ENCODE measurements at regions of chr19 and their contacts with region 1.

Region 1: DNA sequence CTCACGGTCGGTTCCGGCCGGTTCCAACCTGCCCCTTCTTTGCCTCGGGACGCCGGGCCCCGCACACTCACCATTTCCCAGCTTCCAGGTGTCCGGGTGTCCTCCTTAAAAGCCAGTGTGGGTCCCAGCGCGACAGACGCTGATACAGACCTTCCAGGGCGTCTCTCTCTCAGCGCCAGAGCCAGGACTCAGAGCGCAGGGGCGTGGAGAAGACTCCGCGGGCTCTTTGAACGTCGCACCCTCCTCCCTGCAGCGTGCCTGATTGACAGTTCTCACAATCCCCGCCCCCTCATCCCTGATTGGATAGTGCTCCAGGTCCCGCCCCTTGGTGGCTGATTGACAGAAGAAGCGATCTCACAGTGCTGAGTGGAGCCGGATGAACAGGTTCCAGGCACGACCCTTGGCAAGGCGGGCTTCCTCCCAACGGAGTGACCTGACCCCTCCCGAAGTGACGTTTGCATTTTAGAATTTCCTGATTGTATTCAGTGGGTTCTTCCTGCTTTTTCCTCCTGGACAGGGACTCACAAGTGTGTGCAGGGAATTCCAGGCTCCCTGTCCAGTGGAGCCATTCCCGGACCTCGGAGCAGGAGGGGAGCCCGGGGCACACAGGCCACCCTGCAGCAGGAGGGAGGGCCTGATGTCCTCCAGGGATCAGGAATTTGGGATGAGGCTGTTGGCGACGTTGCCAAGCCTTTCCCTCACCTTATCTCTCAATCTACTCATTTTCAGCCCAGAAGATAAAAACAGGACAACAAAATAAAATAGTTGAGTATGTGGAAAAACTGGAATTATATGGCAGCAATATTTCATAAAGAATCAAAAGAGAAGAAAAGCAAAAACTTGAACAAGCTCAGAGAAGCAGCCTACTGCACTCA is at the start of gene ZNF823:
- DNase-seq: peak; percentile 100
- H3K4me3 ChIP-seq: peak within 1 kb of the TSS; percentile 91 to 99 (median 95)
- H3K27ac ChIP-seq: peak within 1 kb of the TSS; percentile 89 to 97 (median 94)
- H3K4me1 ChIP-seq: peaks cover 0 to 24% (median 18%) of the 10 kb centered on the region in 4 donors
- H3K27me3 ChIP-seq: no peaks in the 10 kb centered on the region
- CTCF ChIP-seq: no peak
- EP300 ChIP-seq: no peak
- POLR2A ChIP-seq: peak; percentile 72 to 93
- total RNA-seq, gene ZNF823: 4.1 to 22.8 (median 17.3) TPM

Region 2: DNA sequence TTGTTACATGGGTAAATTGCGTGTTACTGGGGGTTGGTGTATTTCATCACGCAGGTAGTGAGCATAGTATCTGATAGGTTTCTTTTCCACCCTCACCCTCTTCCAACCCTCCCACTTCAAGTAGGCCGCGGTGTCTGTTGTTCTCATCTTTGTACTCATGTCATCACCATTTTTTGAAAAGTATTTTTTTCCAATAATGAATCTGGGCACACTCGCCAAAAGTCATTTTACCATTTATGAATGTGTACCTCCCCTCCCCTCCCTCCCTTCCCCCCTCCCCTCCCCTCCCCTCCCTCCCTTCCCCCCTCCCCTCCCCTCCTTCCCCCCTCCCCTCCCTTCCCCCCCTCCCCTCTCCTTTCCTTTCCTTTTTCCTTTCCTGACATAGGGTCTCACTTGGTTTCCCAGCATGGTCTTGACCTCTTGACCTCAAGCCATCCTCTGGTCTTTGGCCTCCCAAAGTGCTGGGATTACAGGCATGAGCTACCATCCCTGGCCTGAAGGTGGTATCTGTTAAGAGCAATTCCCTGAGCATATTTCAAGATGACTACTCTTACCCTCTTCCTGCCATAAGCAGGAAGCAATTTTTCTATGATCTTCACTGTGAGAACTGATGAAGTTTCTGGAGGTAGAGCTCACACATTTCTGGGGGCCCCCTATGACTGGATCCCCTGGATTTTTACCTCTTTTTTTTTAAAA is 126.0 kb before region 1 on chr19:
- intact Hi-C with region 1: no loop called
- DNase-seq: no peak
- H3K4me3 ChIP-seq: no peak overlapping the region
- H3K27ac ChIP-seq: no peak overlapping the region
- H3K4me1 ChIP-seq: no peaks in the 10 kb centered on the region
- H3K27me3 ChIP-seq: no peaks in the 10 kb centered on the region
- CTCF ChIP-seq: no peak
- EP300 ChIP-seq: no peak
- POLR2A ChIP-seq: no peak

Region 3: GRCh38 chr19:11694533-11695439 is 44.2 kb before region 1 on chr19:
- intact Hi-C with region 1: loop called (anchors 2 kb)
- DNase-seq: peak; percentile 97
- H3K4me3 ChIP-seq: peak overlapping the region; percentile 66 to 79 (median 76)
- H3K27ac ChIP-seq: peak overlapping the region; percentile 61 to 75 (median 74)
- H3K4me1 ChIP-seq: peaks cover 0 to 13% (median 10%) of the 10 kb centered on the region in 4 donors
- H3K27me3 ChIP-seq: no peaks in the 10 kb centered on the region
- CTCF ChIP-seq: no peak
- EP300 ChIP-seq: no peak
- POLR2A ChIP-seq: peak in 1 of 2 donors; percentile 39

Region 4: DNA sequence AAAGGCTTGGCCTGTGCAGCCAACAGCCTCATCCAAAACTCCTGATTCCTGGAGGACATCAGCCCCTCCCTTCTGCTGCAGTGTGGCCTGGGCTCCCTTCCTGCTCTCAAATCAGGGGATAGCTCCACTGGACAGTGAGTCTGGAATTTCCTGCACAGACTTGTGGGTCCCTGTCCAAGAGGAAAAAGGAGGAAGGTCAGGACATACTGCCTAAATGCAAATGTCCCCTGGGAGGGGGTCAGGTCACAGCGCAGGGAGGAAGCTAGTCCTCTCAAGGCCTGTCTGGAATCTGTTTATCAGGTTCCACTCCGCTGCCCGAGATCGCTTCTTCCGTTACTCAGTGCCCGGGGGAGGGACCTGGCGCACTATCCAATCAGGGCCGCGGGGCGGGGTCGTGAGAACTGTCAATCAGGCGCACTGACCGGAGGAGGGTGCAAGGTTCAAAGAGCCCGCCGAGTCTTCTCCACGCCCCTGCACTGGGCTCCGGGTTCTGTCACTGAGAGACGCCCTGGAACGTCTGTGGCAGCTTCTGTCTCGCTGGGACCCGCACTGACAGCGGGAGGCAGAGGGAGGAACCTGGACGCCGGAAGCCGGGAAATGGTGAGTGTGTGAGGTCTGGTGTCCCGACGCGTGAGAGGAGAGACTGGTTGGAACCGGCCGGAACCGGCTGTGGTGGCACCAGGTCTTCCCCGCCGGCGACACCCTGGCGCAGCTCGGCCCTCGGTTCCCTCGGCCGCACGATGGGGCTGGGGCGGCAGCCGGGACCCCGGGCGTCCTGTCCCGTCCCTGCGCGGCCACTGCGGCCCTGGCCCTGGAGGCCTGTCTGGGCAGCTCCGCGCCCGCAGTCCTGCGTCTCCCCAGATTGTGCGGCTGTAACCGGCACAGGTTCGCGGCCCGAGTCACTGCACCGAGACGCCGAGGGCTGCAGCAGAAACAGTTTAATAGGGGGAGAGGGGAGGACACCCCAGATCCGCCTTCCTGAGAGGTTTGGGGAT is 27.9 kb after region 1 on chr19 and contains the start of gene ZNF441:
- intact Hi-C with region 1: loop called (anchors 1 kb)
- DNase-seq: peak; percentile 98
- H3K4me3 ChIP-seq: peak within 1 kb of the TSS; percentile 73 to 87 (median 80)
- H3K27ac ChIP-seq: peak within 1 kb of the TSS; percentile 87 to 95 (median 94)
- H3K4me1 ChIP-seq: peaks cover 0 to 19% (median 16%) of the 10 kb centered on the region in 4 donors
- H3K27me3 ChIP-seq: no peaks in the 10 kb centered on the region
- CTCF ChIP-seq: no peak
- EP300 ChIP-seq: peak in 2 of 4 donors; percentile 6 to 74
- POLR2A ChIP-seq: peak; percentile 73 to 76
- total RNA-seq, gene ZNF441: 8.4 to 10.5 (median 8.8) TPM

Region 5: DNA sequence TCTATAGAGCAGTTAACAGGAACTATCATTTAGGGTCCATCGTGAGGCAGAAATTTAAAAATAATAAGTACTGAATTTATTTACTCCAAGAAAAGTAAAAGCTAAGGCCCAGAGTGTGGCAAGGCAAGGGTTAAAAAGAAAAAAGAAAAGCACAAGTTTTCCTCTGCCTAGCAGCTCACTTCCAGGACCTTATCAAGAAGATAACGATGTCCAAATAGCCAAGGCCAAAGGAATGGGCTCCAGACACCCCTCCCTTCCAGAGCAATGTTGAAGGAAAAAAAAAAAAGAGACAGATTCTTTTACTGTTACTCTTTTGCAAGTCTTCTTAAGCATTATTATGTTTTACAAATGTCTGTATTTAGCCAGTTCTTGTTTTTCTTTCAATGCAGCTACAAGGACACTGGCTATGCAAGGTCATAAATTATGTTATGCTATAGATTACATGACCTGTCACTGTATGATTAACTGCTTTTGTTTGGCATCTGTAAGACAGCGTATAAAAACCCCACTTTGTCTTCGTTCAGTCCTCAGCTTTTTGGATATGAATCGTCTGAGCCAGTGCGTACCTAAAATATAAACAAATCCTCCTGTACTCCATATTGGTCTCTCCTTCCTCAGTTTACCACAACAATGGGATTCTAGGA is 183.0 kb after region 1 on chr19:
- intact Hi-C with region 1: no loop called
- DNase-seq: no peak
- H3K4me3 ChIP-seq: no peak overlapping the region
- H3K27ac ChIP-seq: no peak overlapping the region
- H3K4me1 ChIP-seq: peaks cover 0 to 27% (median 18%) of the 10 kb centered on the region in 4 donors
- H3K27me3 ChIP-seq: no peaks in the 10 kb centered on the region
- CTCF ChIP-seq: no peak
- EP300 ChIP-seq: no peak
- POLR2A ChIP-seq: no peak